HCT116 (cell line): ENCODE measurements at regions of chr12 and their contacts with region 1.

Region 1: DNA sequence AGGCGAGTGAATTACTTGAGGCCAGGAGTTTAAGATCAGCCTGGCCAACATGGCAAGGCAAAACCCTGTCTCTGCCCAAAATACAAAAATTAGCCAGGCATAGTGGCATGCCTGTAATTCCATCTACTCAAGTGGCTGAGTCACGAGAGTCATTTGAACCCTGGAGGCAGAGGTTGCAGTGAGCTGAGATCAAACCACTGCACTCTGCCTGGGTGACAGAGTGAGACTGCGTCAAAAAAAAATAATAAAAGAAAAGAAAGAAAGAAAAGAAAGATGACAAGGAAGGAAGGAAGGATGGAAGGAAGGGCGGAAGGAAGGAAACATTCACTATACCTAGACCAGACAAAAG is 159.6 kb upstream of the CNOT2 start:
- DNase-seq: no peak
- ATAC-seq: no peak
- H3K4me3 ChIP-seq: no peak overlapping the region
- H3K27ac ChIP-seq: no peak overlapping the region
- H3K4me1 ChIP-seq: no peaks in the 10 kb centered on the region
- H3K27me3 ChIP-seq: no peaks in the 10 kb centered on the region
- CTCF ChIP-seq: no peak
- POLR2A ChIP-seq: no peak
- RAD21 ChIP-seq: no peak

Region 2: DNA sequence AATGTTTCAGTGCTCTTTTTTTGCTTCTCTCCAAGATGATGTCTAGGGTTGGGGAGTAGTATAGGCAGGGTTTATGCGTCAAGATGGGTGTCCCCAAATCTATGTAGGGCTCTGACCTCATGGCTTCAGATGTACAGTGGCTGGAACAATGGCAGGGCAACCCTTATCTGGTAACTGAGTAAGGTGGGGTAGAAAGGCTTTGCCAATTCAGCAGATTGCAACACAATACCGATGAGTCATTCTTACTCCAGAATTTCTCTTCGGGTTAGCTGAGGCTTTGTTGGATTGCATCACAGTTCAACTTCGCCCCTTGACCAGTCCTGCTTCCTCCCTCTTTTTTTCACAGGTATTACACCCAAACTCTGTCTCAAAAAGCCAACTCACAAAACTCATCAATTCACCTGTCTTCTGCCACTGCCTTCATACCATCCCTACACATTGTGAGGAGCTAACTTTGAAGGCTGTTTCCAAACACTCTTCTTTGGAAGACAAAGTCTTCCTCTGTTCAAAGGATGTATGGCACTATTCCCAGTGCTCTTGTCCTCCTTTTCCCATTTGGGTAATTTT is 30.6 kb before region 1 on chr12:
- CTCF ChIA-PET with region 1: no interaction called
- POLR2A ChIA-PET with region 1: no interaction called
- RAD21 ChIA-PET with region 1: no interaction called
- intact Hi-C with region 1: loop called (anchors 2 kb)
- DNase-seq: peak; percentile 75
- ATAC-seq: peak; percentile 86
- H3K4me3 ChIP-seq: no peak overlapping the region
- H3K27ac ChIP-seq: no peak overlapping the region
- H3K4me1 ChIP-seq: peaks cover 19 to 34% of the 10 kb centered on the region in 2 experiments
- H3K27me3 ChIP-seq: no peaks in the 10 kb centered on the region
- CTCF ChIP-seq: no peak
- POLR2A ChIP-seq: no peak
- RAD21 ChIP-seq: peak; percentile 29; the same call in 1 of the 2 replicates

Region 3: GRCh38 chr12:70449074-70449761 is 365.6 kb after region 1 on chr12:
- CTCF ChIA-PET with region 1: no interaction called
- POLR2A ChIA-PET with region 1: no interaction called
- RAD21 ChIA-PET with region 1: no interaction called
- intact Hi-C with region 1: no loop called
- DNase-seq: peak; percentile 87
- ATAC-seq: peak; percentile 89
- H3K4me3 ChIP-seq: peak overlapping the region in 1 of 2 experiments; percentile 52; a peak in 2 of 4 replicates
- H3K27ac ChIP-seq: peak overlapping the region; percentile 58
- H3K4me1 ChIP-seq: peaks cover 19 to 48% of the 10 kb centered on the region in 2 experiments
- H3K27me3 ChIP-seq: no peaks in the 10 kb centered on the region
- CTCF ChIP-seq: no peak
- POLR2A ChIP-seq: no peak
- RAD21 ChIP-seq: no peak; the same call in 1 of the 2 replicates